ENCODE measurements at regions of chr18 and their contacts with region 1.

Region 1: GRCh38 chr18:12726774-12727550 is 24.1 kb downstream of the PSMG2 start:
- DNase-seq: peak; percentile 66
- ATAC-seq: peak; percentile 86
- H3K4me3 Mint-ChIP-seq: no peak overlapping the region
- H3K27ac Mint-ChIP-seq: no peak overlapping the region
- H3K4me1 Mint-ChIP-seq: peaks cover under 1% of the 10 kb centered on the region
- H3K27me3 Mint-ChIP-seq: no peaks in the 10 kb centered on the region
- CTCF ChIP-seq: peak; percentile 96

Region 2: DNA sequence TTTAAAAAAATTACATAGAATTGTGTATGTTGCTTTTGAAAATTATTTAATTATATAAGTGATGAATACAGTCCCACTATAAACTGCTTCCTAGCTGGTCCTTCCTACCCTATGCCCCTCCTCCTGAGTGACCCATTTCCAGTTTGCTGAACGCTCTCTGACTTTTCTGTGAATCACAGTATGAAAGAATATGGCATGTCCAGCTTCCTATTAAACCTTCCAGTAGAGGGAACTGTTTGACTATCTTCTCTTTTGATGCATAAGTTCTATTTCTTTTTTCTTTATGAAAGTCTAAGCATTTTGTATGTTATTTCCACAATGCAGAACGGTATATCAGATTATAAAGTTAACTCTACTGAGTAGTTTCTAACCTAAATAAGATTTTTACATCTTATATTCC is 17.1 kb after region 1 on chr18:
- CTCF ChIA-PET with region 1: interaction called, 26 read pairs
- POLR2A ChIA-PET with region 1: interaction called, 4 read pairs
- intact Hi-C with region 1: no loop called
- DNase-seq: no peak
- ATAC-seq: peak; percentile 53
- H3K4me3 Mint-ChIP-seq: no peak overlapping the region
- H3K27ac Mint-ChIP-seq: no peak overlapping the region
- H3K4me1 Mint-ChIP-seq: no peaks in the 10 kb centered on the region
- H3K27me3 Mint-ChIP-seq: no peaks in the 10 kb centered on the region
- CTCF ChIP-seq: peak; percentile 64

Region 3: GRCh38 chr18:12769644-12770440 is 42.9 kb after region 1 on chr18:
- CTCF ChIA-PET with region 1: interaction called, 11 read pairs
- POLR2A ChIA-PET with region 1: no interaction called
- intact Hi-C with region 1: no loop called
- DNase-seq: no peak
- ATAC-seq: no peak
- H3K4me3 Mint-ChIP-seq: no peak overlapping the region
- H3K27ac Mint-ChIP-seq: no peak overlapping the region
- H3K4me1 Mint-ChIP-seq: peaks cover 11% of the 10 kb centered on the region
- H3K27me3 Mint-ChIP-seq: no peaks in the 10 kb centered on the region
- CTCF ChIP-seq: no peak

Region 4: GRCh38 chr18:12890506-12890905 is 163.5 kb after region 1 on chr18:
- CTCF ChIA-PET with region 1: interaction called, 71 read pairs
- POLR2A ChIA-PET with region 1: interaction called, 3 read pairs
- intact Hi-C with region 1: loop called (anchors 5 kb)
- DNase-seq: no peak
- ATAC-seq: no peak
- H3K4me3 Mint-ChIP-seq: no peak overlapping the region
- H3K27ac Mint-ChIP-seq: no peak overlapping the region
- H3K4me1 Mint-ChIP-seq: peaks cover 16% of the 10 kb centered on the region
- H3K27me3 Mint-ChIP-seq: peaks cover 9% of the 10 kb centered on the region
- CTCF ChIP-seq: no peak

Region 5: GRCh38 chr18:12904012-12904516 is 177.1 kb after region 1 on chr18:
- CTCF ChIA-PET with region 1: interaction called, 12 read pairs
- POLR2A ChIA-PET with region 1: no interaction called
- intact Hi-C with region 1: no loop called
- DNase-seq: peak; percentile 77
- ATAC-seq: peak; percentile 82
- H3K4me3 Mint-ChIP-seq: peak overlapping the region; percentile 48
- H3K27ac Mint-ChIP-seq: peak overlapping the region; percentile 60
- H3K4me1 Mint-ChIP-seq: peaks cover 4% of the 10 kb centered on the region
- H3K27me3 Mint-ChIP-seq: no peaks in the 10 kb centered on the region
- CTCF ChIP-seq: no peak

Region 6: DNA sequence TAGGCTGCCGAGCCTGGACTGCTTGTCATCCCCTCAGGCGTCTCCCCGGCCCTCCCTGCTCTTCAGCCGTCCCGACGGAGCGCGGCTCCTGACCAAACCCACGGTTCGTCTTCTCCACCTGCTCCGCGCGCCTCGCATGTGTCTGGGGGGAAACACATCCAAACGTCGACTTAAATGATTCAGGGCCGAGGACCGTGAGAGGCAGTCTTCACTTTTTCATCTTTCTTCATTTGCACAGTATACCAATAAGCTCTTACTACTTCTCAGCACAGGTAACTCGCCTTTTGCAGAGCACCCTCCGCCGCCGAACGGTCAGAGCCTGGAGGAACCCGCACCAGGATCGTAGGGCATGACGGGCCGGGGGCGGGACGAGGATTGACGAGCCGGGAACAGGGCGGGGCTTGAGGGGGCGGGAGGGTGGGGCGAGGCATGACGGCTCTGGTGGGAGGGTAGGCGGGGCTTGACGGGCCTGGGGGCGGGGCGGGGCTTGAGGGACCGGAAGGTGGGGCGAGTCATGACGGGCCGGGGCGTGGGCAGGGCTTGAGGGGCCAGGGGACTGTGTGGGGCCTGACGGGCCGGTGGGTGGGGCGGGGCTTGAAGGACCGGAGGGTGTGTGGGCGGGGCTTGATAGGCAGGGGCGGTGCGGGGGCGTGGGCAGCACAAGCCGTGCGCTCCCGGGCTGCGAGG is 220.5 kb after region 1 on chr18 and contains the start of gene SEH1L:
- CTCF ChIA-PET with region 1: interaction called, 12 read pairs
- POLR2A ChIA-PET with region 1: no interaction called
- intact Hi-C with region 1: no loop called
- DNase-seq: peak; percentile 100
- ATAC-seq: peak; percentile 88
- H3K4me3 Mint-ChIP-seq: peak within 1 kb of the TSS; percentile 95
- H3K27ac Mint-ChIP-seq: peak within 1 kb of the TSS; percentile 99
- H3K4me1 Mint-ChIP-seq: peaks cover 39% of the 10 kb centered on the region
- H3K27me3 Mint-ChIP-seq: no peaks in the 10 kb centered on the region
- CTCF ChIP-seq: no peak
- total RNA-seq, gene SEH1L: 105 to 110 TPM

Measured in activated CD8-positive, alpha-beta T cell treated with anti-CD3 and anti-CD28 coated beads for 36 hours (primary cell).